GM10248 (cell line): ENCODE measurements at regions of chr6 and their contacts with region 1.

Region 1: GRCh38 chr6:126773112-126773805 is 345.2 kb upstream of the RSPO3 start:
- DNase-seq: no peak
- CTCF ChIP-seq: no peak

Region 2: GRCh38 chr6:126784161-126784790 is 11.0 kb after region 1 on chr6:
- CTCF ChIA-PET with region 1: interaction called, 10 read pairs
- POLR2A ChIA-PET with region 1: no interaction called
- DNase-seq: no peak
- CTCF ChIP-seq: no peak

Region 3: DNA sequence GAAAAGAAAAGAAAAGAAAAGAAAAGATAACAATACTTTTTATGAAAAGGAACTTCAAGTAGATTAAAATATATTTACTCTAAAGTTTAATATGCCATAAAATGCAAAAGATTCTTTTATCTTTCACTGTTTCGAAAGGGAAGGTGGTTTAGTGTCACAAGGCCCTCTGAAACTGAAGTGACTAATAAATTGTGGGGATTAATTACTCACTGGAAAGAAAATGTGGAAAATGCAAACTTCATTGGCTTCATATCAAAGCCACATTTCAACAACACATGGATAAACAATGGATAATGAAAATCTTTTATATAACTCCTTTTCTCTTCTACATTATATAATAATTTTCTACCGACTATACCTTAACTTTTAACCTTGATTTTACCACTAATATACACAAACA is 24.7 kb after region 1 on chr6:
- CTCF ChIA-PET with region 1: no interaction called
- POLR2A ChIA-PET with region 1: no interaction called
- DNase-seq: no peak
- CTCF ChIP-seq: no peak